ENCODE measurements at regions of chr2 and their contacts with region 1.

Region 1: GRCh38 chr2:25197336-25198208 is 29.2 kb upstream of the POMC start:
- H3K4me3 ChIP-seq: no peak overlapping the region
- H3K27ac ChIP-seq: no peak overlapping the region
- H3K4me1 ChIP-seq: no peaks in the 10 kb centered on the region; the same call in 1 of the 2 replicates
- CTCF ChIP-seq: no peak

Region 2: DNA sequence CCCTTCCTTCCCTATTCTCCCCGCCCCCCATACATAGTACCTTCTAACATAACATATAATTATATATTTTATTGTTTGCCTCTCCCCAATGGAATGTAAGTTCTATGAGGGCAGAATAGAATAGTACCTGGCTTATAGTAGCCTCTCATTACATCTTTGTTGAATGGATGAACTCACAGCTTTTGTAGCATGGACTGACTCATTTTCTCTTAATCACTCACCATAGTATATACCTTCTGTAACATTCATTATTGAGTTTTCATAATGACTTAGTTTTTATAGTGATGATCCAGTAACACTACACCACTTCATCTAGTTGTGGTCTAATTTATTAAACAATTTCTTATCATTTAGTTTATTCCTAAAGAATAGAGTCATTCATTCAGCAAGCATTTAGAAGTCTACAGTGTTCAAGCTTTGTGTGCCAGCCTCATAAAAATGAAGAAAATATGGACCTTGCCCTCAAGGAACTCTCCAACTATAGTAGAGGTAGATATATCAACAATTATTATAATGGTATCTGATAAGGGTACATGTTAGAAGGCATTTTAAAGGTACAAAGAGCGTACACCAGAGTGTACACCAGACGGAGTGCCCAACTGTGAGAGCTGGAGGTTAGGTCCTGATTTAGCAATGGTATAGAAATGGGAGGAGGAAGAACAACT is 675.5 kb before region 1 on chr2:
- CTCF ChIA-PET with region 1: no interaction called
- POLR2A ChIA-PET with region 1: no interaction called
- H3K4me3 ChIP-seq: no peak overlapping the region
- H3K27ac ChIP-seq: no peak overlapping the region
- H3K4me1 ChIP-seq: peaks cover 3% of the 10 kb centered on the region; the same call in 1 of the 2 replicates
- CTCF ChIP-seq: no peak

Region 3: GRCh38 chr2:24920098-24920808 is 277.3 kb before region 1 on chr2 and contains the start of gene ADCY3:
- CTCF ChIA-PET with region 1: no interaction called
- POLR2A ChIA-PET with region 1: no interaction called
- H3K4me3 ChIP-seq: peak within 1 kb of the TSS; percentile 61
- H3K27ac ChIP-seq: peak within 1 kb of the TSS; percentile 86
- H3K4me1 ChIP-seq: no peaks in the 10 kb centered on the region; the same call in 1 of the 2 replicates
- CTCF ChIP-seq: no peak

Region 4: GRCh38 chr2:25165992-25166875 is 31.3 kb before region 1 on chr2:
- CTCF ChIA-PET with region 1: interaction called, 26 read pairs
- POLR2A ChIA-PET with region 1: no interaction called
- H3K4me3 ChIP-seq: no peak overlapping the region
- H3K27ac ChIP-seq: no peak overlapping the region
- H3K4me1 ChIP-seq: no peaks in the 10 kb centered on the region
- CTCF ChIP-seq: peak; percentile 57